ENCODE measurements at regions of chrX and their contacts with region 1.

Region 1: GRCh38 chrX:153214934-153215333 is 35.9 kb downstream of the MAGEA1 start:
- DNase-seq: no peak
- H3K4me3 ChIP-seq: no peak overlapping the region
- CTCF ChIP-seq: no peak

Region 2: DNA sequence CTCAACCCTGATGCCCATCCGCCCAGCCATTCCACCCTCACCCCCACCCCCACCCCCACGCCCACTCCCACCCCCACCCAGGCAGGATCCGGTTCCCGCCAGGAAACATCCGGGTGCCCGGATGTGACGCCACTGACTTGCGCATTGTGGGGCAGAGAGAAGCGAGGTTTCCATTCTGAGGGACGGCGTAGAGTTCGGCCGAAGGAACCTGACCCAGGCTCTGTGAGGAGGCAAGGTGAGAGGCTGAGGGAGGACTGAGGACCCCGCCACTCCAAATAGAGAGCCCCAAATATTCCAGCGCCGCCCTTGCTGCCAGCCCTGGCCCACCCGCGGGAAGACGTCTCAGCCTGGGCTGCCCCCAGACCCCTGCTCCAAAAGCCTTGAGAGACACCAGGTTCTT is 35.8 kb before region 1 on chrX and contains the start of gene MAGEA1:
- in situ Hi-C with region 1: loop called (anchors 5 kb)
- DNase-seq: no peak
- H3K4me3 ChIP-seq: no peak within 1 kb of the TSS
- CTCF ChIP-seq: no peak

Region 3: GRCh38 chrX:153297376-153297775 is 82.4 kb after region 1 on chrX:
- in situ Hi-C with region 1: no loop called
- DNase-seq: no peak
- H3K4me3 ChIP-seq: no peak overlapping the region
- CTCF ChIP-seq: no peak

Measured in astrocyte of the cerebellum (primary cell).